Activated CD4-positive, alpha-beta memory T cell treated with anti-CD3 and anti-CD28 coated beads for 36 hours (primary cell): ENCODE measurements at regions of chr17 and their contacts with region 1.

Region 1: DNA sequence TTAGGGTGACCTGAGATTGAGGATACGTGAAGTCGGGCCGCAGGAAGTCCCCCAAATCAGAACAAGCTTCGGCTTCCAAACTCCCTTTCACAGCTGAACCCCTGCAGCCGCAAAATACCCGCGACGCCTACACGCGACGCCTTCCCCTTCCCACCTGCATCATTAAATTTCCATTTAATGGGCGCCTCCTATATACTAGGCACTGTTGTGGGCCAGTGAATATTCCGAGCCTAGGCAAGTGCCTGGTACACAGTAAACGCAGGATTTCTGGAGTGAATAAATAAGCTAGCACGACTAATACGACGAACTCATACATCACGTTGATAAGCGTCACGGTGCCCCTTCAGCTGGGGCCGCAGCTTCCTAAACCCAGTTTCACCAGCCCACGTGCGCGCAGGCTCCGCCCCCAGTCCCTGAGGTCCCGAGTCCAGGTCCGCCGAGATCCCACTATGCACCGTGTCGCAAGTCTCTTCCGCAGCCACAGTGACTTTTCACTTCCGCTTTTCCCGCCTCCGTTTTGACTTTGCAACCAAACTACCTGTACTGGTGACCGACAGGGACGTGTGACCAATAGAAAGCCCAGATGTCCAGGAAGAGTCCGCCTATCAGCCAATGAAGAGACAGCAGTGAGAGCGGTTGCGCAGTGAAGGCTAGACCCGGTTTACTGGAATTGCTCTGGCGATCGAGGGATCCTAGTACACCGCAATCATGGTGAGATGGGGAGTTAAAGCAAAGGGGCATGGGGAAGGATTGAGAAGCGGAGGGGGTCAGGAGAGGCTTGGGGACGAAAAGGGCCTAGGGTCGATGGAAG is at the start of gene PSMB3:
- DNase-seq: peak; percentile 99
- H3K4me3 Mint-ChIP-seq: peak within 1 kb of the TSS; percentile 92
- H3K27ac Mint-ChIP-seq: peak within 1 kb of the TSS; percentile 94
- H3K4me1 Mint-ChIP-seq: peaks cover 40% of the 10 kb centered on the region
- H3K27me3 Mint-ChIP-seq: peaks cover 27% of the 10 kb centered on the region
- total RNA-seq, gene PSMB3: 335 to 348 TPM

Region 2: DNA sequence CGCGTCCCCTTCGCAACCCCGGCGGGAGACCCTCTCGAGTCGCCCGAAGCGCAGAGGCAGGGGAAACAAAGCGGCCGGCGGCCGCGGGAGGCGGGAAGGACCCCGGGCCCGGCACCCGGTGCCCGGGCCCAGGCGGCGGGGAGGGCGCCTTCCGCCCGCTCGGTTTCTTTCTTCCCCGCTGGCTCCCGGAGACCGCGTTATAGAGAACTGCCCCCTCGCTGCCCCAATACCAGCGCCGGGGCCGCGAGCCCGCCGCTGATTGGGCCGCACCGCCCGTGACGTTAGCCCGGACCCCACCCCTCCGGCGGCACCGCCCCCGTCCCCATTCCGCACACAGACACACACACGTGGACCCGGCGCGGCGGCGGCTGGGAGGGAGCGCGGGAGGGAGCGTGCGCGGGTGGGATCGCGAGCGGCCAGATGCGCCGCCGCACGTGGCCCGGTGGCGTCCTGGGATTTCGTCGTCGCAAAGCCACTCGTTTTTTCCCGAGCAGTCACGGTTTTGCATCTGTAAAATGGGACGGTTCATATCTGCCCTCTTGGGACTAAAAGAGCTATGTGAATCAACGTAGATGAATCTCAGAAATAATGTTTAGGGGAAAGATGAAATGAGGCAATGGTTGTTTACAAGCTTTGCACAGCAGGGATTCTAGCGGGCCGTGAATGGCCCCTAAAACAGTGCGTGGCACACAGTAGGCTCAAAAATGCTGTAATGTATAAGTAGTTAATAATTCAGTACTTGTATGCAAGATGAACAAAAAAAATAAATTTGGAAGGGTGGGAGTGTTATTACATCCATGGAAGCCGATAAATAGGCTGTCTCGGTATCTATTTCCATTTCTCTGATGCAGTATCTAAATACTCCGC is 77.3 kb before region 1 on chr17 and contains the start of gene EPOP:
- CTCF ChIA-PET with region 1: interaction called, 10 read pairs
- POLR2A ChIA-PET with region 1: no interaction called
- intact Hi-C with region 1: loop called (anchors 1 kb)
- DNase-seq: peak; percentile 94
- H3K4me3 Mint-ChIP-seq: peak within 1 kb of the TSS; percentile 62
- H3K27ac Mint-ChIP-seq: peak within 1 kb of the TSS; percentile 93
- H3K4me1 Mint-ChIP-seq: peaks cover 46% of the 10 kb centered on the region
- H3K27me3 Mint-ChIP-seq: peaks cover 10% of the 10 kb centered on the region
- total RNA-seq, gene EPOP: 37.1 to 38.0 TPM

Region 3: GRCh38 chr17:38729886-38730525 is 22.3 kb before region 1 on chr17 and contains the start of gene CISD3:
- CTCF ChIA-PET with region 1: interaction called, 39 read pairs
- POLR2A ChIA-PET with region 1: interaction called, 9 read pairs
- intact Hi-C with region 1: loop called (anchors 1 kb)
- DNase-seq: peak; percentile 89
- H3K4me3 Mint-ChIP-seq: peak within 1 kb of the TSS; percentile 92
- H3K27ac Mint-ChIP-seq: peak within 1 kb of the TSS; percentile 98
- H3K4me1 Mint-ChIP-seq: peaks cover 78% of the 10 kb centered on the region
- H3K27me3 Mint-ChIP-seq: no peaks in the 10 kb centered on the region
- total RNA-seq, gene CISD3: 54.7 to 59.1 TPM

Region 4: DNA sequence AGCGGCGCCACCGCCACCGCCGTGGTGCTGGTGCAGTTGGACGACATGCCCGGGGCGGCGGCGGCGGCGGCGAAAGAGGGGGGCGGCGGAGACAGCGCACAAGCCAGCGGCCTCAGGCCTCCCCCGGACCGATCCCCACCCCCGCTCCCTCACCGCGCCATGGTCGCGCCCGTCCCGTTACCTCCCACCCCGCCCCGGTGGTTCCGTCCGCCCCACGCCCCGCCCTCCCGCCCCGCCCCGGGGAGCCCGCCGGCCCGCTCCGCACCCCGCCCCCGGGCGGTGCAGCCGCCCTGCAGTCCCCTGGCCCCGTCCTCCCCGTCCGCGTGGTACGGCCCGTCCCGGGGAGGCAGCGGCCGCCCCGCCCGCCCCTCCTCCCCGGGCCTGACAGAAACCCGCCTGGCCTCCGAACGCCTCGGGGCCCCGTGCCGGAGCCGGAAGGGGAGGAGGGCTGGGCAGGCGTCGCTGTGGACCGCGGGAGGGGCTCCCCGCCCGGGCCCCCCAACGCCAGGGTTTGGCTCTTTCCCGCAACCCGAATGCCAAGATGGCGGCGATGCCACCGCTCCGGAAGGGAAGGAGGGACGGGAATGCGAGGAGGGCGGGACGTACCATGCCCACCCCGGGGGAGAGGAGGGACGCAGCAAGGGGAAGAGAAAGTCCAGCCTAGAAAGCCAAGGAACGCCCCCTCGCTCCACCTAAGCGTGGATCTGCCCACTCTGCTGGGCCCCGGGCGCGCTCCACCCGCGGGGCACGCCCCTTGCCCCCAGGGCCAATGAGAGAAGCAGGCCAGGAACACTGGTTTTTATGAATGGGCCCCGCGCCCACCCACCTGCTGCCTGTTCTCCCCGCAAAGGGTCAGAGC is 47.3 kb after region 1 on chr17 and contains the start of gene PIP4K2B:
- CTCF ChIA-PET with region 1: no interaction called
- POLR2A ChIA-PET with region 1: no interaction called
- intact Hi-C with region 1: loop called (anchors 2 kb)
- DNase-seq: peak; percentile 94
- H3K4me3 Mint-ChIP-seq: peak within 1 kb of the TSS; percentile 80
- H3K27ac Mint-ChIP-seq: peak within 1 kb of the TSS; percentile 86
- H3K4me1 Mint-ChIP-seq: peaks cover 33% of the 10 kb centered on the region
- H3K27me3 Mint-ChIP-seq: no peaks in the 10 kb centered on the region
- total RNA-seq, gene PIP4K2B: 37.8 to 37.9 TPM